HepG2 (cell line): ENCODE measurements at regions of chr6 and their contacts with region 1.

Region 1: DNA sequence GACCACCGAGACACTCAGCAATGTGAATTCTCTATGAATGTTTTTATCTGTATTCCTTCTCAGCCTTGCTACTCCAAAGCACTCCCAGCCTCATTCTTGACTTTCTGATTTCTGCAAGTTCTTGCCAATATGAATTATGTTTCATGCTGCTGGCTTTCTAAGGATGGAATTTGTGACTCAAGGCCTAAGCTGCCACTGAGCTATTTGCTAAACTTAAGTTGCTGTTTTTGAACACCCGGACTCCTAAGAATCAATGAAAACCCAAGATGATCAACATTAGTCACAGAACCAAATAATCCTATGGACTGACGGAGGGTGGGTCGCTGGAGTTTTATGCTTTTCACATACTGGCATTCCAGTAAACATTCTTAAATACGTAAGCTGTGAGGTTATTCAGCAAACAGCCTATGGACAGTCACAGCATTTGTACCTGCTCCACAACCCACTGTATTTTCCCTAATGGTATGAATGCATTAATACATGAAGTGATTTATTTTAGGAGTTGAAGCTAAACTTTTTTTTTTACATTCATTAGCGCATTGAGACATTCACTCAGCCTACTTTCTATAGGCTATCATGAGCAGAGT is 8.2 kb upstream of the PXDC1 start:
- DNase-seq: peak; percentile 43
- ATAC-seq: peak; percentile 38; the same call in 2 of the 3 replicates
- H3K4me3 ChIP-seq: no peak overlapping the region; a peak in 1 of 6 replicates
- H3K27ac ChIP-seq: no peak overlapping the region
- H3K4me1 ChIP-seq: peaks cover 45% of the 10 kb centered on the region
- H3K27me3 ChIP-seq: peaks cover 0 to 7% of the 10 kb centered on the region in 2 experiments; a peak in 2 of 5 replicates
- CTCF ChIP-seq: no peak
- EP300 ChIP-seq: no peak
- POLR2A ChIP-seq: no peak
- RAD21 ChIP-seq: no peak

Region 2: GRCh38 chr6:3805448-3806123 is 45.8 kb after region 1 on chr6:
- CTCF ChIA-PET with region 1: no interaction called
- POLR2A ChIA-PET with region 1: interaction called, 15 read pairs
- in situ Hi-C with region 1: no loop called
- intact Hi-C with region 1: loop called (anchors 5 kb)
- DNase-seq: peak; percentile 85
- ATAC-seq: peak; percentile 57
- H3K4me3 ChIP-seq: peak overlapping the region; percentile 40 to 63 (median 44); a peak in 5 of 6 replicates
- H3K27ac ChIP-seq: peak overlapping the region; percentile 99
- H3K4me1 ChIP-seq: peaks cover 70% of the 10 kb centered on the region
- H3K27me3 ChIP-seq: no peaks in the 10 kb centered on the region
- CTCF ChIP-seq: 0 out of 2 replicates have a peak, but pooled peaks have one; percentile 5
- EP300 ChIP-seq: 0 out of 4 replicates have a peak, but pooled peaks of 1 of the 2 experiments have one; percentile 24
- POLR2A ChIP-seq: no peak
- RAD21 ChIP-seq: no peak